ENCODE measurements at regions of chr20 and their contacts with region 1.

Region 1: GRCh38 chr20:18287915-18288748 is at the start of gene ZNF133:
- DNase-seq: peak; percentile 96 to 98
- ATAC-seq: peak; percentile 98 to 100 (median 99)
- H3K4me3 ChIP-seq: peak within 1 kb of the TSS; percentile 65 to 95 (median 83)
- H3K27ac ChIP-seq: peak within 1 kb of the TSS; percentile 91 to 100 (median 96)
- H3K4me1 ChIP-seq: peaks cover 0 to 19% (median 14%) of the 10 kb centered on the region in 9 donors
- H3K27me3 ChIP-seq: peaks cover 0 to 30% (median 16%) of the 10 kb centered on the region in 7 donors
- CTCF ChIP-seq: peak in 2 of 9 donors; percentile 12 to 22
- total RNA-seq, gene ZNF133: 4.9 to 7.2 (median 5.6) TPM

Region 2: DNA sequence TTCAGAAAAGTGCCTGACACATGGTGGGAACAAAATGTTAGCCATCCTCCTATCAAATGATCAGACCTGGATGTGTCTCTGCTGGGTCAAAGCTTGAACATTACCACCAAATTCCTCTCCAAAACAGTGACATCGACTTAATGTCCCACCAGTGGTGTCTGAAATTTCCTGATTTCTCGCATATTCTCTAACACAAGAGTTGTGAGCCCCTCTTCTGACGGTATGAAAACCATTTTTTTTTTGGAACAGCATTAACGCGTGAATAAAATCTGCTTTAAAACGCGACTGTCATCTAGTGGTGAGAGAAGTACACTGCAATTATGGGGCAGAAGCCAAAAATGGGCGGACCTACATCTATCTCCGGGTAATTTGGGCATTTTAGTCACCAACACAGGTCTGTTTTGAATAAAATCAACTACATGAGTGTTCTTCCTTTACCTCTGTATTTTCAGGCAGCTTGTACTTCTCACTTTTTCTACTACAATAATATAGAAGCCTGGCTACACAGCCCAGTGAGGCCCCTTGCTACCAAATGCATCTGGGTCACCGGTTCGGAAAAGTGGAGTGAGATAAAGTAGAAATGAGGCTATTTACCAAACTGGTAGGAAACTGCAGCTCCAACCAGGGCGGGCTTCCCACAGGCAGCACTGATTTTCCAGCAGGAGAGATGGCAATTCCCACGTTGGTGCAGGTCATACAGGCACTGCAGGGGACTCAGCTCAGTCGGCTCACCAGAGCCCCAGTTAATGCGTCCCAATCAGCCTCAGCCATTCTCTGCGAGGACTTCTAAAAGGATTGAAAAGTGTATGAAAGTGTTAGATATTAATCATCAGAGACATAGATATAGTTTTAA is 291.9 kb before region 1 on chr20:
- intact Hi-C with region 1: loop called in 1 of 10 experiments (anchors 10 kb)
- DNase-seq: peak in 1 of 2 donors; percentile 46
- ATAC-seq: peak in 6 of 8 donors; percentile 62 to 79 (median 70)
- H3K4me3 ChIP-seq: peak overlapping the region in 1 of 10 donors; percentile 15
- H3K27ac ChIP-seq: no peak overlapping the region
- H3K4me1 ChIP-seq: peaks cover 0 to 11% (median 0%) of the 10 kb centered on the region in 9 donors
- H3K27me3 ChIP-seq: no peaks in the 10 kb centered on the region
- CTCF ChIP-seq: peak; percentile 89 to 98 (median 96)

Region 3: DNA sequence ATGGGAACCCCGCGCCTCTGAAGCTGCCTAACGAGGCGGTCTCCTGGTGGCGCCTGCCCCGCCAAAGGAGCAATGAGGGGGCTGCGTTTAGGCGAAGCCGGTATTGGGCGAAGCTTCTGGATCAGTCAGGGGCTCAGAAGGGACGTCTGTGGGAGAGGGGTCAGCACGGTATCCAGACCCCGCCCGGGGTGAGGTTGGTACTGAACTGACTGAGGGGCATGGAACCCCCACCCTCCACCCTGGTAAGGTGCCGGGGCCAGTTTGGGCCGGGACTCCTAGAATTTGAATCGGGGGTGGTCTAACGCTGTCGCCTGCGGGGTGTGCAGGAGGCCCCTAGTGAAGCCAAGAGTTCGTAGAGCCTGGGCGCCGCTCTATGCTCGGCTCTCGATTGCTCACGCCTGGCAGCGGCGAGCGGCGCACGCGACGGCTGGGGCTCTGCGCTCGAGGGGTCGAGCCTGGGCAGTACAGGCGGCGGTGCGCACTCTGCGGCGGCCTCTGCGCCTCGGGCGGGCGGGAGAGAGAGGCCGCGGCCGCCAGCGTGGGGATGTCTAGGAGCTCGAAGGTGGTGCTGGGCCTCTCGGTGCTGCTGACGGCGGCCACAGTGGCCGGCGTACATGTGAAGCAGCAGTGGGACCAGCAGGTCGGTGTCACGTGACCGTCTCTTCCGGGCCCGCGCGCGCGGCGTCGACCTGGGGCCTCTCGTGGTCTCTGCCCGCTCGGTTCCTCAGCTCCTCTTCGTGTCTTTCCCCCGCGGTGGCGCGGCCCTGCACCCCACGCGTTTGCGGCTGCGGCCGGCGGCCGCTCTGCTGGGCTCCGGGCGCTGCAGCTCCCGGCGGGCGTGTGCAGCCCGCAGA is 150.5 kb before region 1 on chr20 and contains the starts of genes KAT14 and PET117:
- intact Hi-C with region 1: loop called in 8 of 10 experiments (anchors 5 to 10 kb)
- DNase-seq: peak; percentile 91 to 93
- ATAC-seq: peak; percentile 98 to 99 (median 99)
- H3K4me3 ChIP-seq: peak within 1 kb of the TSS; percentile 79 to 96 (median 92)
- H3K27ac ChIP-seq: peak within 1 kb of the TSS; percentile 74 to 96 (median 90)
- H3K4me1 ChIP-seq: peaks cover 5 to 37% (median 21%) of the 10 kb centered on the region in 9 donors
- H3K27me3 ChIP-seq: no peaks in the 10 kb centered on the region
- CTCF ChIP-seq: peak in 1 of 9 donors; percentile 3
- total RNA-seq, gene KAT14: 8.9 to 16.5 (median 10.8) TPM
- total RNA-seq, gene PET117: 9.2 to 14.5 (median 12.0) TPM